ENCODE measurements at regions of chr19 and their contacts with region 1.

Region 1: GRCh38 chr19:10936661-10937084 is 8.1 kb downstream of the TIMM29 start:
- DNase-seq: peak; percentile 35
- ATAC-seq: peak; percentile 90
- H3K4me3 ChIP-seq: no peak overlapping the region
- H3K27ac ChIP-seq: no peak overlapping the region
- H3K4me1 ChIP-seq: no peaks in the 10 kb centered on the region; the same call in 1 of the 2 replicates
- H3K27me3 ChIP-seq: no peaks in the 10 kb centered on the region
- CTCF ChIP-seq: peak; percentile 64 to 70 (median 65)
- EP300 ChIP-seq: no peak
- POLR2A ChIP-seq: no peak
- RAD21 ChIP-seq: peak; percentile 82

Region 2: DNA sequence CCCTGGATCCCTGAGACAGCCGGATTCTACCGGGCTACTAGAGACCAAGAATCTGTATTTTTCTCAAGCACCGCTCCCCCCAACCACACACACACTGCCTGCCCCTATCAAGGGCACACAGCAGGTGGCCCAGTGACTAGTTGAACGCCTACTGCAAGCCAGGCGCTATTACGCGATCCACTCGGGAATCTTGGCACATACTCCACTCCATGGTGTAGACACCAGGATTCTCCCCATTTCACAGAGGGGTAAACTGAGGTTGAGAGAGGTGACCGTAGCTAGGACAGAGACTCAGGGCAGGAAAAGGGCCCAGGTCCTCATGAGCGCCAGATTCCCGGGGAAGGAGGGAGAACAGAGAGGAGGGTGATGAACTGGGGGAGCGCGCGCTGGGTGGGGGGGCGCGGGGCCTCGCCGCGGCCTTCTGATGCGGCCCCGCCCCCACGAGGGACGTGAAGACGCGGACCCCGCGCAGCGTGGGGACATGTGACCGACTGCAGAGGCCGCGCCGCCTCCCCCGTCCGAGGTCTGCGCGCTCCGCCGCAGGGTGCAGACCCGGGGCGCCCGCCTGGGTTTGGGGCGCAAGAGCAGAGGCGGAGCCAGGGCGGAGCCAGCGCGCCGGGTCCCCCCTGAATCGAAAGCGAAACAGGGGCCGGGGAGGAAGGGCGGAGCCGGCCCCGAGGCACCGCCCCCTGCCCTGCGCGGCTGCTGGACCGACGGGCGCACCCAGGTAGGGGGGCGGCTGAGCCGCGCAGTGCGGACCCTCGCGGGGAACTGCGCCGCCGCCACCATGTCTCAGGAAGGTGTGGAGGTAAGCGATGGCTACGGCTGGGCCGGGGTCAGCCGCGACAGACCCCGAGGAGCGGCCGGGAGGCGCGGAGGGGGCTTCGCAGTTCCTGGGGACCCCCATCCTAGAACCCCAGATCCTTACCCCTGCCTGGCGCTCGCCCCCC is 850.8 kb before region 1 on chr19 and contains the start of gene SHFL:
- CTCF ChIA-PET with region 1: no interaction called
- POLR2A ChIA-PET with region 1: no interaction called
- RAD21 ChIA-PET with region 1: no interaction called
- SMC1A ChIA-PET with region 1: no interaction called
- in situ Hi-C with region 1: no loop called
- intact Hi-C with region 1: no loop called
- DNase-seq: no peak
- ATAC-seq: peak; percentile 97
- H3K4me3 ChIP-seq: peak within 1 kb of the TSS; percentile 86
- H3K27ac ChIP-seq: peak within 1 kb of the TSS; percentile 95
- H3K4me1 ChIP-seq: 0 out of 2 replicates have a peak, but pooled peaks cover 3% of the 10 kb centered on the region
- H3K27me3 ChIP-seq: no peaks in the 10 kb centered on the region
- CTCF ChIP-seq: no peak
- EP300 ChIP-seq: no peak
- POLR2A ChIP-seq: peak; percentile 83
- RAD21 ChIP-seq: no peak
- polyA plus RNA-seq, gene SHFL: 8.0 to 18.3 TPM

Region 3: DNA sequence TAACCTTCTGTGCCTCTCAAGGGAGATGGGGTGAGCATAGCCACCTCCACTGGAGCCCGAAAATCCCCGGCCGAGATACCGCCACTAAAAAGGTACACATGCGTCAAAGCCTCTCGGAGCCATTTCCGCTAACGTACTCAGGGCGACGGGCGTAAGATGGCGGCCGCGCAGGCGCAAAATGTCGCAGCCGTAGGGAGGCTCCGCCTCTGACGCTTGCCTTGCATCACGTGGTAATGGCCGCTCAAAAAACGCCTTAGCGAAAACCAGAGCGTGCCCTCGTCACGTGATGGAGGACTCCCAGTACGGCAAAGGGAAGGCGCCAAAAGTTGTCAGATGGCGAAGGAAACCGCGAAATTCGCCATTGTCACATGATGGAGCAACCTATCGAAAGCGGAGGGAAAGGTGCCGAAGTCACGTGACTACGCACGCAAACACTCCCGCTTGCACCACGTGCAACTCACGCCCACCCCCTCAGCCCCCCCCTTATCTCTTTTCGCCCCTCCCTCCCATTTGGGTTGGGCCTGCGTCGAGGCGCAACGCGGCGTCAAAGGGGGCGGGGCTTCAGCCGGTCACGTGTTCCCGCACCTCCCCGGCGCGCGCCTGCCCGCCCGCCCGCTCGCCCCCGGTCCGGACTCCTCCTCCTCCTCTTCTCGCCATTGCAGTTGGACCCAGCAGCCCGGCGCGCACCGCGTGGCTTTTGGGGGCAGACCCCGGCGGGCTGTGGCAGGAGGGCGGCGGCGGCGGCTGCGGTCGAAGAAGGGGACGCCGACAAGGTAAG is 282.8 kb before region 1 on chr19 and contains the start of gene ILF3:
- CTCF ChIA-PET with region 1: no interaction called
- POLR2A ChIA-PET with region 1: no interaction called
- RAD21 ChIA-PET with region 1: no interaction called
- SMC1A ChIA-PET with region 1: no interaction called
- in situ Hi-C with region 1: no loop called
- intact Hi-C with region 1: no loop called
- DNase-seq: peak; percentile 100
- ATAC-seq: peak; percentile 83
- H3K4me3 ChIP-seq: peak within 1 kb of the TSS; percentile 91
- H3K27ac ChIP-seq: peak within 1 kb of the TSS; percentile 99
- H3K4me1 ChIP-seq: peaks cover 6% of the 10 kb centered on the region
- H3K27me3 ChIP-seq: no peaks in the 10 kb centered on the region
- CTCF ChIP-seq: no peak
- EP300 ChIP-seq: peak; percentile 52 to 54
- POLR2A ChIP-seq: peak; percentile 89
- RAD21 ChIP-seq: no peak
- polyA plus RNA-seq, gene ILF3: 28.1 to 38.1 TPM

Region 4: GRCh38 chr19:10946964-10947657 is 10.4 kb after region 1 on chr19:
- CTCF ChIA-PET with region 1: interaction called, 31 read pairs
- POLR2A ChIA-PET with region 1: interaction called, 7 read pairs
- RAD21 ChIA-PET with region 1: interaction called, 9 read pairs
- SMC1A ChIA-PET with region 1: interaction called, 4 read pairs
- in situ Hi-C with region 1: no loop called
- intact Hi-C with region 1: no loop called
- DNase-seq: no peak
- ATAC-seq: no peak
- H3K4me3 ChIP-seq: no peak overlapping the region
- H3K27ac ChIP-seq: no peak overlapping the region
- H3K4me1 ChIP-seq: no peaks in the 10 kb centered on the region
- H3K27me3 ChIP-seq: no peaks in the 10 kb centered on the region
- CTCF ChIP-seq: no peak
- EP300 ChIP-seq: no peak
- POLR2A ChIP-seq: no peak
- RAD21 ChIP-seq: no peak

Region 5: GRCh38 chr19:10968527-10969135 is 32.0 kb after region 1 on chr19:
- CTCF ChIA-PET with region 1: interaction called, 39 read pairs
- POLR2A ChIA-PET with region 1: interaction called, 5 read pairs
- RAD21 ChIA-PET with region 1: interaction called, 30 read pairs
- SMC1A ChIA-PET with region 1: interaction called, 18 read pairs
- in situ Hi-C with region 1: no loop called
- intact Hi-C with region 1: no loop called
- DNase-seq: peak; percentile 41
- ATAC-seq: peak; percentile 74
- H3K4me3 ChIP-seq: peak overlapping the region; percentile 50
- H3K27ac ChIP-seq: peak overlapping the region; percentile 50
- H3K4me1 ChIP-seq: peaks cover 41% of the 10 kb centered on the region
- H3K27me3 ChIP-seq: no peaks in the 10 kb centered on the region
- CTCF ChIP-seq: peak in 1 of 3 experiments; percentile 11; a peak in 1 of 6 replicates
- EP300 ChIP-seq: no peak
- POLR2A ChIP-seq: peak; percentile 29; the same call in 1 of the 2 replicates
- RAD21 ChIP-seq: 0 out of 2 replicates have a peak, but pooled peaks have one; percentile 3

Region 6: DNA sequence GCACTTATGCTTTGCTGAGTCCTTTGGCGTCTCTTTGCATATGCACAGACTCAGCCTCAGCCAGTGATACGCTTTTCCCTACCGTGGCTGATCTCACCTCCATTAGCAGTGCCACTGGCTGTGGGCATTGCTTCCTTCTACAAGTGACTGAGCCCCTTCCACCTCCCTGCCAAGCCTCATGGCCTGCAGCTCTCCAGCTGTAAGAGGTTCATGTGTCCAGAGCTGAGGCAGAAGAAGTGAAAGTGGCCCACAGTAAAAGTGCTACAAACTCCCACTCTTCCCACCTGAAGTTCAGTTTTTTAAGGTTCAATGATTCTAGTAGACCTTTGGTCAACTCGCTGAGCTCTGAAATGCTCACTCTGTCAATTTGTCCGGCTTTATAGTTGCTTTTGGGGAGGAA is 68.8 kb after region 1 on chr19:
- CTCF ChIA-PET with region 1: interaction called, 20 read pairs
- POLR2A ChIA-PET with region 1: interaction called, 3 read pairs
- RAD21 ChIA-PET with region 1: interaction called, 14 read pairs
- SMC1A ChIA-PET with region 1: interaction called, 14 read pairs
- in situ Hi-C with region 1: no loop called
- intact Hi-C with region 1: loop called (anchors 10 kb)
- DNase-seq: no peak
- ATAC-seq: no peak
- H3K4me3 ChIP-seq: no peak overlapping the region
- H3K27ac ChIP-seq: no peak overlapping the region
- H3K4me1 ChIP-seq: no peaks in the 10 kb centered on the region
- H3K27me3 ChIP-seq: no peaks in the 10 kb centered on the region
- CTCF ChIP-seq: no peak
- EP300 ChIP-seq: no peak
- POLR2A ChIP-seq: no peak
- RAD21 ChIP-seq: no peak

Region 7: DNA sequence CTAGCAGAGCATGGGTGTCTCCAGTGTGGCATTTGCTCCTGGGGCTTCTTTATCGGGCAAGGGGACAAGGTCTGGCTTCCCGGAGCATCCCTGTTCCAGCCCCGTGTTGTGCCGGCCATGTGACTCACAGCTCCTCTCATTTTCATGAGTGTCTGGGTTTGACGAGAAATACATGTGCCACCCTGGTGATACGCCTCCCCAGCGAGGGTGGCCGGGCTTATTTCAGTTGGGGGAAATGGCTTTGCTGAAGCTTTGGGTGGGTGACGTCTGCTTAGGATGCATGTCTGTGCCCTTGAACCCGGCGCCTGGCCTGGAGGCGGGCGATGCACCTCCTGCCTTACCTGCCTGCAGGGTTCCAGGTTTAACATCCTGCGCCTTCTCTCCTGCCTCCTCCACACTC is 90.7 kb after region 1 on chr19:
- CTCF ChIA-PET with region 1: interaction called, 10 read pairs
- POLR2A ChIA-PET with region 1: interaction called, 3 read pairs
- RAD21 ChIA-PET with region 1: interaction called, 4 read pairs
- SMC1A ChIA-PET with region 1: interaction called, 3 read pairs
- in situ Hi-C with region 1: no loop called
- intact Hi-C with region 1: no loop called
- DNase-seq: no peak
- ATAC-seq: no peak
- H3K4me3 ChIP-seq: no peak overlapping the region
- H3K27ac ChIP-seq: no peak overlapping the region
- H3K4me1 ChIP-seq: no peaks in the 10 kb centered on the region
- H3K27me3 ChIP-seq: no peaks in the 10 kb centered on the region
- CTCF ChIP-seq: no peak
- EP300 ChIP-seq: no peak
- POLR2A ChIP-seq: no peak
- RAD21 ChIP-seq: no peak

Region 8: GRCh38 chr19:11125994-11126685 is 189.5 kb after region 1 on chr19:
- CTCF ChIA-PET with region 1: interaction called, 13 read pairs
- POLR2A ChIA-PET with region 1: interaction called, 5 read pairs
- RAD21 ChIA-PET with region 1: interaction called, 6 read pairs
- SMC1A ChIA-PET with region 1: interaction called, 4 read pairs
- in situ Hi-C with region 1: no loop called
- intact Hi-C with region 1: loop called (anchors 5 kb)
- DNase-seq: no peak
- ATAC-seq: peak; percentile 86
- H3K4me3 ChIP-seq: no peak overlapping the region
- H3K27ac ChIP-seq: no peak overlapping the region
- H3K4me1 ChIP-seq: no peaks in the 10 kb centered on the region
- H3K27me3 ChIP-seq: no peaks in the 10 kb centered on the region
- CTCF ChIP-seq: peak; percentile 75 to 80 (median 78)
- EP300 ChIP-seq: no peak
- POLR2A ChIP-seq: no peak
- RAD21 ChIP-seq: peak; percentile 49

Measured in GM12878 (cell line).